Activated CD4-positive, alpha-beta T cell treated with anti-CD3 and anti-CD28 coated beads, Interleukin-2, amount 10 ng/mL, durations not matched to agents 24 days and 14 days (primary cell): ENCODE measurements at regions of chr5 and their contacts with region 1.

Region 1: DNA sequence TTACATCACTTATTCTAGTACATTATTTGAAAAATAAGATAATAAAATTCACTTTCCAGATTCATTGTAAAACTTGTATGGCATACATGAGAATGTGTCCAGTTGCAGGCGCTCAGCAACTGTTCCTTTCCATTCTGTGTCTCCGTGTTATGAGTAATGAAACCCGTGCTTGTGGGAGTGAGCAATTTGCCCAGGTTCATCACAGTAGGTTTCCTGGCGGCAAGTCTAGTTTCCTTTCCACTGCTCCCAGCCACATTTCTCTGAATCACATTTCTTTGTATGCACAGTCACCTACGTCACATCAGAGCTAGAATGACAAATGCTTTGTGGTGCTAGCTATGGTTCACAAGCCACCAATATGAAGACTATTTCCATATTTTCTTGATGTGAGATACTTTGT is 39.9 kb downstream of the MOCS2 start:
- DNase-seq: peak; percentile 92
- H3K4me3 Mint-ChIP-seq: peak overlapping the region; percentile 54
- H3K27ac Mint-ChIP-seq: peak overlapping the region; percentile 85
- H3K4me1 Mint-ChIP-seq: peaks cover 28% of the 10 kb centered on the region
- H3K27me3 Mint-ChIP-seq: no peaks in the 10 kb centered on the region

Region 2: GRCh38 chr5:52989781-52990527 is 79.7 kb before region 1 on chr5:
- intact Hi-C with region 1: loop called (anchors 1 kb)
- DNase-seq: peak; percentile 85
- H3K4me3 Mint-ChIP-seq: peak overlapping the region; percentile 84
- H3K27ac Mint-ChIP-seq: peak overlapping the region; percentile 66
- H3K4me1 Mint-ChIP-seq: peaks cover 44% of the 10 kb centered on the region
- H3K27me3 Mint-ChIP-seq: peaks cover 1% of the 10 kb centered on the region

Region 3: GRCh38 chr5:53041071-53041692 is 28.4 kb before region 1 on chr5:
- intact Hi-C with region 1: loop called (anchors 1 kb)
- DNase-seq: peak; percentile 81
- H3K4me3 Mint-ChIP-seq: peak overlapping the region; percentile 76
- H3K27ac Mint-ChIP-seq: peak overlapping the region; percentile 82
- H3K4me1 Mint-ChIP-seq: peaks cover 65% of the 10 kb centered on the region
- H3K27me3 Mint-ChIP-seq: no peaks in the 10 kb centered on the region

Region 4: GRCh38 chr5:53089345-53089991 is 19.8 kb after region 1 on chr5:
- intact Hi-C with region 1: loop called (anchors 1 kb)
- DNase-seq: peak; percentile 77
- H3K4me3 Mint-ChIP-seq: peak overlapping the region; percentile 45
- H3K27ac Mint-ChIP-seq: peak overlapping the region; percentile 42
- H3K4me1 Mint-ChIP-seq: peaks cover 38% of the 10 kb centered on the region
- H3K27me3 Mint-ChIP-seq: no peaks in the 10 kb centered on the region